ENCODE measurements at regions of chr17 and their contacts with region 1.

Region 1: GRCh38 chr17:42517516-42517915 is 18.5 kb upstream of the NAGLU start:
- DNase-seq: peak; percentile 80
- ATAC-seq: peak; percentile 77
- H3K4me3 ChIP-seq: no peak overlapping the region
- H3K27ac ChIP-seq: no peak overlapping the region
- H3K4me1 ChIP-seq: peaks cover 53% of the 10 kb centered on the region
- H3K27me3 ChIP-seq: no peaks in the 10 kb centered on the region
- CTCF ChIP-seq: peak; percentile 98
- EP300 ChIP-seq: no peak
- POLR2A ChIP-seq: no peak
- RAD21 ChIP-seq: peak; percentile 89

Region 2: GRCh38 chr17:42322382-42323267 is 194.9 kb before region 1 on chr17:
- CTCF ChIA-PET with region 1: interaction called, 18 read pairs
- POLR2A ChIA-PET with region 1: no interaction called
- in situ Hi-C with region 1: loop called (anchors 5 kb)
- intact Hi-C with region 1: no loop called
- DNase-seq: peak; percentile 90
- ATAC-seq: peak; percentile 97
- H3K4me3 ChIP-seq: no peak overlapping the region
- H3K27ac ChIP-seq: no peak overlapping the region
- H3K4me1 ChIP-seq: peaks cover 6% of the 10 kb centered on the region
- H3K27me3 ChIP-seq: no peaks in the 10 kb centered on the region
- CTCF ChIP-seq: peak; percentile 100
- EP300 ChIP-seq: 0 out of 4 replicates have a peak, but pooled peaks of 1 of the 2 experiments have one; percentile 27
- POLR2A ChIP-seq: no peak
- RAD21 ChIP-seq: peak; percentile 100

Region 3: GRCh38 chr17:42373896-42374295 is 143.6 kb before region 1 on chr17:
- CTCF ChIA-PET with region 1: no interaction called
- POLR2A ChIA-PET with region 1: no interaction called
- in situ Hi-C with region 1: no loop called
- intact Hi-C with region 1: no loop called
- DNase-seq: no peak
- ATAC-seq: no peak
- H3K4me3 ChIP-seq: no peak overlapping the region
- H3K27ac ChIP-seq: no peak overlapping the region
- H3K4me1 ChIP-seq: peaks cover 23% of the 10 kb centered on the region
- H3K27me3 ChIP-seq: no peaks in the 10 kb centered on the region
- CTCF ChIP-seq: no peak
- EP300 ChIP-seq: no peak
- POLR2A ChIP-seq: no peak
- RAD21 ChIP-seq: no peak

Region 4: GRCh38 chr17:42422958-42423712 is 94.4 kb before region 1 on chr17 and contains the start of gene CAVIN1:
- CTCF ChIA-PET with region 1: interaction called, 15 read pairs
- POLR2A ChIA-PET with region 1: interaction called, 27 read pairs
- in situ Hi-C with region 1: loop called (anchors 5 kb)
- intact Hi-C with region 1: loop called (anchors 1 kb)
- DNase-seq: peak; percentile 90
- ATAC-seq: peak; percentile 84
- H3K4me3 ChIP-seq: peak within 1 kb of the TSS; percentile 78 to 95 (median 88)
- H3K27ac ChIP-seq: peak within 1 kb of the TSS; percentile 7
- H3K4me1 ChIP-seq: peaks cover 47% of the 10 kb centered on the region
- H3K27me3 ChIP-seq: no peaks in the 10 kb centered on the region; a peak in 1 of 5 replicates
- CTCF ChIP-seq: no peak; the same call in 1 of the 2 replicates
- EP300 ChIP-seq: 0 out of 4 replicates have a peak, but pooled peaks of 1 of the 2 experiments have one; percentile 28
- POLR2A ChIP-seq: peak; percentile 90 to 94
- RAD21 ChIP-seq: no peak
- total RNA-seq, gene CAVIN1: 25.5 and 26.0 TPM in 2 replicates

Region 5: DNA sequence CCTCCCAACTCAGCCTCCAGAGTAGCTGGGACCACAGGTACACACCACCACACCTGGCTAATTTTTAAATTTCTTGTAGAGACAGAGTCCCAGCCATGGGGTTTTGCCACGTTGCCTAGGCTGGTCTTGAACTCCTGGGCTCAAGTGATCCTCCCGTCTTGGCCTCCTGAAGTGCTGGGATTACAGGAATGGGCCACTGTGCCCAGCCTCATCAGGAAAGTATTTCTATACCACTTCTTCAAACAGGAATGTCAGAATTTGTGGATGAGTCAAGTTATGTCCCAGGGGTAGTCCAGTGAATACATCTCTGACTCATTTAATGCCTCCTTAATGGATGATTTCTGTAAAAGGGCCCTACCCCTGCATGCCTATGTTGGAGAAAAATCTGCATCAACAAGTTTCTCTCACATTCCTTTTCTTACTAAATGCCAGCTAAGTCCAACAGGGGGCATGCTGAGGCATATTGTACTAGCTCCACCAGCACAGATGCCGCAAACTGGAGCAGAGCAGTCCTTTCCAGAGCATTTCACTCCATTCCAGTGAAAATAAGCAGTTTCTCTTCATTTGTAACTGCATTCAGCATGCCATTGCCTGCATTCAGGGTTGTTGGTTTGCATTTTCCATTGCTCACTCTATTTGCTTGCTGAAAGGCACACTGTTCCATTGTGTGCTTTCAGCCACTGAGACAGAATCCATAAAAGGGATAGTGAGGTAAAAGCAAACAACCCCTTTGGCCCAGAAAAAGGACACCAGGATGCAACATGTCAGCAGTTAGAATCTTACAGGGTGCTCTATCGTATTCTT is 89.2 kb before region 1 on chr17:
- CTCF ChIA-PET with region 1: interaction called, 15 read pairs
- POLR2A ChIA-PET with region 1: interaction called, 27 read pairs
- in situ Hi-C with region 1: loop called (anchors 5 kb)
- intact Hi-C with region 1: loop called (anchors 1 kb)
- DNase-seq: peak; percentile 91
- ATAC-seq: peak; percentile 88
- H3K4me3 ChIP-seq: peak overlapping the region in 2 of 3 experiments; percentile 7 to 47; a peak in 2 of 6 replicates
- H3K27ac ChIP-seq: peak overlapping the region; percentile 73
- H3K4me1 ChIP-seq: peaks cover 79% of the 10 kb centered on the region
- H3K27me3 ChIP-seq: no peaks in the 10 kb centered on the region
- CTCF ChIP-seq: peak; percentile 90
- EP300 ChIP-seq: peak in 1 of 2 experiments; percentile 85; a peak in 1 of 4 replicates
- POLR2A ChIP-seq: no peak
- RAD21 ChIP-seq: peak; percentile 78

Region 6: GRCh38 chr17:42441371-42442195 is 75.9 kb before region 1 on chr17:
- CTCF ChIA-PET with region 1: no interaction called
- POLR2A ChIA-PET with region 1: no interaction called
- in situ Hi-C with region 1: no loop called
- intact Hi-C with region 1: loop called (anchors 1 kb)
- DNase-seq: peak; percentile 89
- ATAC-seq: peak; percentile 92
- H3K4me3 ChIP-seq: peak overlapping the region in 2 of 3 experiments; percentile 32 to 48; a peak in 4 of 6 replicates
- H3K27ac ChIP-seq: peak overlapping the region; percentile 58
- H3K4me1 ChIP-seq: peaks cover 42% of the 10 kb centered on the region
- H3K27me3 ChIP-seq: no peaks in the 10 kb centered on the region
- CTCF ChIP-seq: no peak
- EP300 ChIP-seq: peak; percentile 26 to 65; a peak in 2 of 4 replicates
- POLR2A ChIP-seq: peak in 1 of 2 experiments; percentile 46; a peak in 1 of 4 replicates
- RAD21 ChIP-seq: no peak

Region 7: GRCh38 chr17:42541041-42541833 is 23.7 kb after region 1 on chr17:
- CTCF ChIA-PET with region 1: no interaction called
- POLR2A ChIA-PET with region 1: interaction called, 25 read pairs
- in situ Hi-C with region 1: no loop called
- intact Hi-C with region 1: no loop called
- DNase-seq: peak; percentile 94
- ATAC-seq: peak; percentile 48
- H3K4me3 ChIP-seq: no peak overlapping the region; a peak in 1 of 6 replicates
- H3K27ac ChIP-seq: peak overlapping the region; percentile 76
- H3K4me1 ChIP-seq: peaks cover 76% of the 10 kb centered on the region
- H3K27me3 ChIP-seq: no peaks in the 10 kb centered on the region
- CTCF ChIP-seq: no peak
- EP300 ChIP-seq: peak; percentile 26 to 76; a peak in 2 of 4 replicates
- POLR2A ChIP-seq: peak; percentile 63 to 64
- RAD21 ChIP-seq: peak; percentile 9; the same call in 1 of the 2 replicates

Measured in HepG2 (cell line).